Stomach (tissue), 19 donors: ENCODE measurements at regions of chr7 and their contacts with region 1.

Region 1: GRCh38 chr7:2477447-2478398 is 1.5 kb upstream of the GRIFIN start:
- DNase-seq: peak; percentile 77 to 89
- H3K4me3 ChIP-seq: peak overlapping the region in 1 of 4 donors; percentile 6
- H3K27ac ChIP-seq: peak overlapping the region; percentile 51 to 69 (median 58)
- H3K4me1 ChIP-seq: peaks cover 17 to 38% (median 29%) of the 10 kb centered on the region in 4 donors
- H3K27me3 ChIP-seq: peaks cover 0 to 72% (median 0%) of the 10 kb centered on the region in 3 donors
- CTCF ChIP-seq: peak in 5 of 7 experiments; percentile 60 to 82 (median 64)
- EP300 ChIP-seq: no peak
- POLR2A ChIP-seq: no peak

Region 2: GRCh38 chr7:2680792-2681490 is 203.2 kb after region 1 on chr7:
- intact Hi-C with region 1: loop called (anchors 10 kb)
- DNase-seq: peak; percentile 87 to 89
- H3K4me3 ChIP-seq: no peak overlapping the region
- H3K27ac ChIP-seq: no peak overlapping the region
- H3K4me1 ChIP-seq: peaks cover 0 to 12% (median 7%) of the 10 kb centered on the region in 4 donors
- H3K27me3 ChIP-seq: peaks cover 0 to 68% (median 13%) of the 10 kb centered on the region in 3 donors
- CTCF ChIP-seq: peak in 5 of 7 experiments; percentile 40 to 71 (median 69)
- EP300 ChIP-seq: no peak
- POLR2A ChIP-seq: no peak